ENCODE measurements at regions of chr6 and their contacts with region 1.

Region 1: DNA sequence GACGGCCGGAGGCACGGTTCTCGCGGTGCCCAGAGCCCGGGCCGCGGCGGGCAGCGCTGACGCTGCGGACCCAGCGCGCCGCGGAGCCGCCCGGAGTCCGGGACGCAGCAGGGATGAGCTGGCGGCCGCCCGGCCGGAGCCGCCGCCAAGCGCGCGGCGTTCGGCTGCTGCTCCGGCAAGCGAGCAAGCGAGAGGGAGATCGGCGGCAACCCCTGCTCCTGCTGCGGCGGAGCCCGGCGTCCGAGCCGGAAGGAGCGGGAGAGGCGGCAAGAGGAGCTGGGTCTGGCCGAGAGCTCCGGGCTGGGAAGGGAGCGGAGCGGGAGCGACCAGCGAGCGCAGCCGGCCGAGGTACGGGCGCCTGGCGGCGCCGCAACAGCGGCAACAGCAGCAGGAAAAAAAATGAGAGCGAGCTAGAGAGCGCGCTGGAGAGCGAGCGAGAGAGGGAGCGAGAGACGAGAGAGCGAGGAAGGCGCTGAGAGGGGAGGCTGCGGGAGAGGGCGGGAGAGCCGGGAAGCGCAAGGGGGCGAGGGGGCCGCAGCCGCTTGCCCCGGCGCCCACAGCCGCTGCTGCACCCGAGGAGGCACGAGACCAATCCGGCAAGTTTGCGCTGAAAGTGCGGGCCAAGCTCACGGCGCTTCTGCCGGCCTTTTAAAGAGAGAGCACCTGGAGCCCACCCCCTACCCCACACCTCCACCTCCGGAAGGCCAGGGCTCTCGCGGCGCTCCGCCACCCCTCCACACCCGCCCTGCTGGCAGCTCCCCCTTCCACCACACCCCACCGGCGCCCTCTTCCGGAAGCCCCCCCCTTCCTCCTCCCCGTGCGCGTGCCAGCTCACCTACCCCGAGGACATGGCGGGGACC is 496 bp downstream of the GRM4 start:
- DNase-seq: peak; percentile 66

Region 2: GRCh38 chr6:33840048-33840926 is 305.1 kb before region 1 on chr6:
- in situ Hi-C with region 1: loop called (anchors 25 kb)
- DNase-seq: peak; percentile 34

Region 3: GRCh38 chr6:33926451-33926850 is 218.9 kb before region 1 on chr6:
- in situ Hi-C with region 1: no loop called
- DNase-seq: no peak

Region 4: DNA sequence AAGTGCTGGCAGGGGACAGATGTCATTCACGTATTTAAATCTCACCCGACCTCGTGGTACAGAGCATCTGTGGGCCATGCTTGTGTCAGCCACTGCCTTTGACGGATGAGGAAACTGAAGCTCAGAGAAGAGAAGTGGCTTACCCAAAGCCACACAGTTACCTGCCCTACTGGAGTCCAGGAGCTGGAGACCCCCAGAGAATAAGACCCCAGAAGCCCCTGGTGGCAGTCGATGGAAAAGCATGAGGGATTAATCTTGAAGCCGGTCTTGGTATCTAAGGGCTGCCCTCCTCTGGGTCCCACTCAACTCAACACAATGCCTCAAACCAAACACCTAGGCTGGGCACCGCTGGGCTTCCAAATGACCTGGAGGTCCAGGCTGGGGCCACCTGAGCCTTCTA is 82.6 kb before region 1 on chr6:
- in situ Hi-C with region 1: loop called (anchors 5 kb)
- DNase-seq: no peak